ENCODE measurements at regions of chr18 and their contacts with region 1.

Region 1: DNA sequence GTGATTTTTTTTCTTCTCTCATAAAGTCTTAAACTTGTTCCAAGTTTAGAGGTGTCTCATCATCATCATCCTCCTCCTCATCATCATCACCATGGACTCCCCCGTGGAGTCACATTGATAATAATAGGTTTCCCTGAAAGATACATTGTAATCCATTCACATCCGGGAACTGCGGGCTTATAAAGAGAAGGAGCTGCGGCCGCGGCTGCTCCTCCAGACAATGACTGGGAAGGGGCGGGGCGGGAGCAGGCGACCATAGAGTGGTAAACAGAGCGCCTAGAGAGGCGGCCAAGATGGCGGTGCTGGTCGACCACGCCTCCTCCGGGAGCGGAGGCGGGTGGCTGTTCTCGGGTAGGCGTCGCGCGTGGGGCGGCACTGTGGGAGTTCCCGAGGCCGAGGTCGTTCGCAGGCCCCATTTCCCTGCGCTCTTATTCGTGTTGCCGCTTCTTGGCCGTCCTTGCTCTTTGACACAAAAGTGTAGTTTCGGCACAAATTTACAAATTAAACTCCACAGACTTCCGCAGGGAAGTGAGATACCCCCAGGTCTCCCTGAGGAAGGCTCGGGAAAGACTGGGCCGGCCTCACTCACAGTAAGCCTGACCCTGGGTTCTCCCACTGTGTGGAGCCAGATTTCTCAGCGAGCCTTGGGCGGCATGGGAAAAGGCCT is 1.8 kb upstream of the TCF4 start:
- DNase-seq: peak; percentile 91
- H3K4me3 ChIP-seq: peak overlapping the region; percentile 56 to 82 (median 65)
- H3K27ac ChIP-seq: peak overlapping the region; percentile 52
- H3K4me1 ChIP-seq: peaks cover 10% of the 10 kb centered on the region
- H3K27me3 ChIP-seq: no peaks in the 10 kb centered on the region
- CTCF ChIP-seq: no peak

Region 2: GRCh38 chr18:55415258-55415871 is 174.4 kb before region 1 on chr18:
- CTCF ChIA-PET with region 1: no interaction called
- dilution Hi-C with region 1: no loop called
- in situ Hi-C with region 1: no loop called
- intact Hi-C with region 1: loop called (anchors 2 kb)
- DNase-seq: peak; percentile 43
- H3K4me3 ChIP-seq: no peak overlapping the region
- H3K27ac ChIP-seq: no peak overlapping the region
- H3K4me1 ChIP-seq: no peaks in the 10 kb centered on the region
- H3K27me3 ChIP-seq: no peaks in the 10 kb centered on the region
- CTCF ChIP-seq: peak; percentile 85 to 90

Region 3: GRCh38 chr18:55422456-55423180 is 167.1 kb before region 1 on chr18:
- CTCF ChIA-PET with region 1: no interaction called
- dilution Hi-C with region 1: no loop called
- in situ Hi-C with region 1: no loop called
- intact Hi-C with region 1: loop called (anchors 2 kb)
- DNase-seq: no peak
- H3K4me3 ChIP-seq: peak overlapping the region; percentile 44 to 62 (median 53)
- H3K27ac ChIP-seq: peak overlapping the region; percentile 53
- H3K4me1 ChIP-seq: peaks cover 10% of the 10 kb centered on the region
- H3K27me3 ChIP-seq: no peaks in the 10 kb centered on the region
- CTCF ChIP-seq: no peak

Region 4: GRCh38 chr18:55634545-55634944 is 44.8 kb after region 1 on chr18:
- CTCF ChIA-PET with region 1: no interaction called
- dilution Hi-C with region 1: no loop called
- in situ Hi-C with region 1: no loop called
- intact Hi-C with region 1: no loop called
- DNase-seq: peak; percentile 85
- H3K4me3 ChIP-seq: no peak overlapping the region
- H3K27ac ChIP-seq: peak overlapping the region; percentile 59
- H3K4me1 ChIP-seq: peaks cover 30% of the 10 kb centered on the region
- H3K27me3 ChIP-seq: no peaks in the 10 kb centered on the region
- CTCF ChIP-seq: no peak

Region 5: GRCh38 chr18:55763298-55763697 is 173.5 kb after region 1 on chr18:
- CTCF ChIA-PET with region 1: no interaction called
- dilution Hi-C with region 1: no loop called
- in situ Hi-C with region 1: no loop called
- intact Hi-C with region 1: loop called (anchors 5 kb)
- DNase-seq: peak; percentile 72
- H3K4me3 ChIP-seq: no peak overlapping the region
- H3K27ac ChIP-seq: no peak overlapping the region
- H3K4me1 ChIP-seq: peaks cover 9% of the 10 kb centered on the region
- H3K27me3 ChIP-seq: no peaks in the 10 kb centered on the region
- CTCF ChIP-seq: no peak